OCI-LY7 (cell line): ENCODE measurements at regions of chrX and their contacts with region 1.

Region 1: GRCh38 chrX:69503782-69504625 is at the start of gene NALF2:
- DNase-seq: peak; percentile 80
- H3K4me3 ChIP-seq: peak within 1 kb of the TSS; percentile 84
- H3K27ac ChIP-seq: peak within 1 kb of the TSS; percentile 68
- H3K4me1 ChIP-seq: peaks cover 27% of the 10 kb centered on the region
- CTCF ChIP-seq: no peak
- total RNA-seq, gene NALF2: 2.8 and 3.3 TPM in 2 replicates

Region 2: GRCh38 chrX:69469975-69470374 is 34.0 kb before region 1 on chrX:
- CTCF ChIA-PET with region 1: no interaction called
- POLR2A ChIA-PET with region 1: no interaction called
- intact Hi-C with region 1: no loop called
- DNase-seq: no peak
- H3K4me3 ChIP-seq: no peak overlapping the region
- H3K27ac ChIP-seq: no peak overlapping the region
- H3K4me1 ChIP-seq: no peaks in the 10 kb centered on the region
- CTCF ChIP-seq: no peak

Region 3: GRCh38 chrX:69538321-69538876 is 34.4 kb after region 1 on chrX:
- CTCF ChIA-PET with region 1: interaction called, 4 read pairs
- POLR2A ChIA-PET with region 1: interaction called, 3 read pairs
- intact Hi-C with region 1: loop called (anchors 5 kb)
- DNase-seq: peak; percentile 26
- H3K4me3 ChIP-seq: no peak overlapping the region
- H3K27ac ChIP-seq: no peak overlapping the region
- H3K4me1 ChIP-seq: peaks cover 26% of the 10 kb centered on the region
- CTCF ChIP-seq: peak; percentile 69

Region 4: DNA sequence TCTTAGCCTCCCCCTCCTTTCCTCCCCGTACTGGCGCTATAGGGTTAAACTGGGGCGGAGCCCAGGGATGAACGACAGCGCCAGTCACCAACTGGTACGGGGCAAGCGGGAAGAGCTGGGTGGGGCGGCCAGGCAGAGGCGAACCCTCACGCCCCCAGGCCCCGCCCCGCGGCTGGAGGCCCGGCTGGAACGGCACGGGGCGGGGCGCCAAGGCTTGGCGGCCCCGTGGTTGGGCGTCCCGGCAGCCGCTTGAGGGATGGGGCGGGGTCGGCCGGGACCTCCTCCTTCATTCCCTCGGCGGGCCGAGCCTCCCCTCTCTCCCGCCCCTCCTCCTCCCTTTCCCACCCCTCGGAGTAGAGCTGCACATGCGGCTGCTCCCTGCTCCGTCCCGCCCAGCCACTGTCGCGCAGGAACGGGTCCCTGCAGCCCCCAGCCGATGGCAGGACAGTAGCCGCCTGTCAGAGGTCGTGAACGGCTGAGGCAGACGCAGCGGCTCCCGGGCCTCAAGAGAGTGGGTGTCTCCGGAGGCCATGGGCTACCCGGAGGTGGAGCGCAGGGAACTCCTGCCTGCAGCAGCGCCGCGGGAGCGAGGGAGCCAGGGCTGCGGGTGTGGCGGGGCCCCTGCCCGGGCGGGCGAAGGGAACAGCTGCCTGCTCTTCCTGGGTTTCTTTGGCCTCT is 111.9 kb after region 1 on chrX and contains the start of gene EDA:
- CTCF ChIA-PET with region 1: no interaction called
- POLR2A ChIA-PET with region 1: interaction called, 3 read pairs
- intact Hi-C with region 1: loop called (anchors 2 kb)
- DNase-seq: peak; percentile 84
- H3K4me3 ChIP-seq: peak within 1 kb of the TSS; percentile 70
- H3K27ac ChIP-seq: no peak within 1 kb of the TSS
- H3K4me1 ChIP-seq: peaks cover 12% of the 10 kb centered on the region
- CTCF ChIP-seq: no peak
- total RNA-seq, gene EDA: 1.2 and 1.8 TPM in 2 replicates

Region 5: DNA sequence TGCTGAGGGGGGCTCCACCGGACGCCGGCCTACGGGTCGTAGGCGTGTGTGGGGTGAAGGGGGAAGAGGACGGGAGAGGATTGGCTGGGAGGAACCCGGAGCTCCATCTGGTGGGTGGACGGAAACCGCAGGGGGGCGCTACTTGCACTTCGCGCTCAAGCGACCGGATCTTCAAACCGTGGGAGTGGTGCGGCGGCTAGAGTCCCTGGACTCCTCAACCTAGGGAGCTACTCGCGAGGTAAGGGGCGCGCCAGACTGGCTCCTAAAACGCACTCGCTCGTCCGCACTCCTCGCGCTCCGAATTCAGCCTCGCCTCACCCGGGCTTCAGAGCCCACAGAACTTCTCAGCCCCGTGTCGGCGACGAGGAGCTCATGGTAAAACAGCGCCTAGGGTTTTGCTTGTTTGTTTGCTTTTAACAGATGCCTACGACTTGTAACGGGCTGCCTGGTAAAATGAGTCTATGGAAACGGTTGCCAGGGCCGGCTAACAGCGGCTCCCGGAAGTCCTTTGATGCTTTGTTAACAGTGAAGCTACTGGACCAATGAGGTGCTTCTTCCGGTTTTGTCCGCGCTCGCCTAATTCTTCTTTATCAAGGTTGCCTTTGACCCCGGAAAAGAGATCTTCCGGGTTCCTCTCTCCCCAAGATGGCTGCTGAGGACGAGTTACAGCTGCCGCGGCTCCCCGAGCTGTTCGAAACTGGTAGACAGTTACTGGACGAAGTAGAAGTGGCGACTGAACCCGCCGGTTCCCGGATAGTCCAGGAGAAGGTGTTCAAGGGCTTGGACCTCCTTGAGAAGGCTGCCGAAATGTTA is 629.5 kb after region 1 on chrX and contains the start of gene IGBP1:
- CTCF ChIA-PET with region 1: interaction called, 4 read pairs
- POLR2A ChIA-PET with region 1: interaction called, 3 read pairs
- intact Hi-C with region 1: loop called (anchors 2 kb)
- DNase-seq: peak; percentile 90
- H3K4me3 ChIP-seq: peak within 1 kb of the TSS; percentile 82
- H3K27ac ChIP-seq: peak within 1 kb of the TSS; percentile 98
- H3K4me1 ChIP-seq: peaks cover 24% of the 10 kb centered on the region
- CTCF ChIP-seq: peak; percentile 77
- total RNA-seq, gene IGBP1: 47.2 and 60.0 TPM in 2 replicates

Region 6: GRCh38 chrX:70444326-70444945 is 940.4 kb after region 1 on chrX and contains the start of gene DLG3:
- CTCF ChIA-PET with region 1: no interaction called
- POLR2A ChIA-PET with region 1: no interaction called
- intact Hi-C with region 1: no loop called
- DNase-seq: no peak
- H3K4me3 ChIP-seq: no peak within 1 kb of the TSS
- H3K27ac ChIP-seq: no peak within 1 kb of the TSS
- H3K4me1 ChIP-seq: no peaks in the 10 kb centered on the region
- CTCF ChIP-seq: no peak
- total RNA-seq, gene DLG3: 0.06 TPM in 1 of 2 replicates, not detected in the other